ENCODE measurements at regions of chr3 and their contacts with region 1.

Region 1: GRCh38 chr3:52231502-52232293 is 6.3 kb upstream of the TLR9 start:
- DNase-seq: peak; percentile 60 to 93 (median 85)
- ATAC-seq: peak; percentile 80 to 87 (median 80)
- H3K4me3 ChIP-seq: no peak overlapping the region
- H3K4me3 Mint-ChIP-seq: peak overlapping the region in 2 of 3 donors; percentile 51 to 55
- H3K27ac ChIP-seq: peak overlapping the region; percentile 13
- H3K27ac Mint-ChIP-seq: peak overlapping the region; percentile 84 to 85
- H3K4me1 ChIP-seq: peaks cover 12 to 59% of the 10 kb centered on the region in 2 experiments
- H3K4me1 Mint-ChIP-seq: peaks cover 53 to 65% (median 57%) of the 10 kb centered on the region in 3 donors
- H3K27me3 ChIP-seq: no peaks in the 10 kb centered on the region
- H3K27me3 Mint-ChIP-seq: no peaks in the 10 kb centered on the region

Region 2: DNA sequence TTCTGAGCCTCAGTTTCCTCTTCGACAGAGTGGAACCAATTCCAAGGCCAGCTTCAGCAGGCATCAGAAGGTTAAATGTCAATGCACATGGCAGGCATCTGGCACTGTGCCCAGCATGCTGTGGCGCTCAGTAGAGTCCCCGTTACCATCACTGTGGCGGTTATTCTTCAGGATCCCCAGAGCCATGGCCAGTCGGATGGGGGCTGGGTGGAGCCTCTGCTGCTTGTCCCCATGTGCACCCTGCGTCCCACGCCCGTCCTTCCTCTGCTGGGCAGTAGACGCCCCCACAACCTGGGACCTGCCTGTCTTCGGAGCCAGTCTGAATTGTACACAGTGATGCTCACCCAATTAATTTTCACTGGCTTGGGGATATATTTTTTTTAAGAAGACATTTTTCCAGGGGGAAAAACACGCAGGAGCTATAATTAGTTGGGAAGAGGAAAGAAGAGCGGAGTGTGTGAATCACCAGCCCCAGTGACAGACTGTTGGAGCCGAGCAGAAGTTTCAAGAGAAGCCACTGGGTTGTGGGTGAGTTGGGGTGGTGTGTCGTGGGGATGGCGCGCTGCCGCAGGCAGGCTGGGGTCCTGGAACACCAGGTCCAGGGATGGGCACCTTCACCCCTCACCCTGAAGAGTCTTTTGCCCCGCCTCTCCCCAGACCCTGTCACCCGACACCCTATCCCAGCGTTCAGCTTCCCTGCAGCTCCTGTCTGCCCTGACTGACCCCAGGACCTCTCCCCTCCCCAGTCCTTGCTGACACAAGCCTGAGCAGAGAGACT is 209.2 kb before region 1 on chr3:
- CTCF ChIA-PET with region 1: no interaction called
- POLR2A ChIA-PET with region 1: no interaction called
- DNase-seq: no peak
- ATAC-seq: no peak
- H3K4me3 ChIP-seq: no peak overlapping the region
- H3K4me3 Mint-ChIP-seq: no peak overlapping the region
- H3K27ac ChIP-seq: no peak overlapping the region
- H3K27ac Mint-ChIP-seq: no peak overlapping the region
- H3K4me1 ChIP-seq: peaks cover 0 to 2% of the 10 kb centered on the region in 2 experiments
- H3K4me1 Mint-ChIP-seq: peaks cover 0 to 9% (median 0%) of the 10 kb centered on the region in 3 donors
- H3K27me3 ChIP-seq: no peaks in the 10 kb centered on the region
- H3K27me3 Mint-ChIP-seq: no peaks in the 10 kb centered on the region

Region 3: DNA sequence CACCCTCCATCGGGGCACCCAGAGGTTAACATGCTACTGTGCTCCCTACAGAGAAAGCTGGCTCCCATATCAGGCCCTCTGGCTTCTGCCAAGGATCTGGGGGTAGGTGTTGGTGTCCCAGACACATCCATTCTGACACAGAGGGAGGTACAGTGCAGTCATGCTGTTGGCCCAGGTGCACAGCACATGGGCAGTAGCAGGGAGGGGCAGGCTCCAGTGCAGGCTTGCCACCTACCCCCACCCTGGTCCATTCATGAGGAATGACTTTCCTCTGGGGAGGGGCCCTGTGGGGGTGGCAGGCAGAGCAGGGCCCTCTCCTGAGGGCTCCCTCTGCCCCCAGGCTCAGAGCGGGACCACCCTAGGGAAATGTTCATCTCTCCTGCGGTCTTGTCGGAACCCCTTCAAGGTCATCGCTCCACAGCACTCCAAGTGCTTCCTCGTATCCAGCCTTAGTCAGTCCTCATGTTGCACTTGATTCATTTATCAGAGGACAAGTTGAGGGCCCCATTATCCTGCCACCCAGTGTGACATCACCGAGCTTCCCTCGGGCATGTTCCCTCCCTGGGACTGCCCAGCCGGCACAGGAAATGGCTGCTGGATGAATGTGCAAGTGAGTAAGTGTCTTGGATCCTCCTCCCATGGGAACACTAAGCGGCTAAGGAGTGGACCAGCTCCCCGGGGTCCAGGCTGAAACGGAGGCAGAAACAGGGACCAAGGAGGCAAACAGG is 185.3 kb before region 1 on chr3:
- CTCF ChIA-PET with region 1: no interaction called
- POLR2A ChIA-PET with region 1: no interaction called
- DNase-seq: no peak
- ATAC-seq: no peak
- H3K4me3 ChIP-seq: no peak overlapping the region
- H3K4me3 Mint-ChIP-seq: no peak overlapping the region
- H3K27ac ChIP-seq: peak overlapping the region; percentile 29
- H3K27ac Mint-ChIP-seq: peak overlapping the region; percentile 72 to 84
- H3K4me1 ChIP-seq: peaks cover 3 to 59% of the 10 kb centered on the region in 2 experiments
- H3K4me1 Mint-ChIP-seq: peaks cover 41 to 58% (median 55%) of the 10 kb centered on the region in 3 donors
- H3K27me3 ChIP-seq: no peaks in the 10 kb centered on the region
- H3K27me3 Mint-ChIP-seq: no peaks in the 10 kb centered on the region

Region 4: DNA sequence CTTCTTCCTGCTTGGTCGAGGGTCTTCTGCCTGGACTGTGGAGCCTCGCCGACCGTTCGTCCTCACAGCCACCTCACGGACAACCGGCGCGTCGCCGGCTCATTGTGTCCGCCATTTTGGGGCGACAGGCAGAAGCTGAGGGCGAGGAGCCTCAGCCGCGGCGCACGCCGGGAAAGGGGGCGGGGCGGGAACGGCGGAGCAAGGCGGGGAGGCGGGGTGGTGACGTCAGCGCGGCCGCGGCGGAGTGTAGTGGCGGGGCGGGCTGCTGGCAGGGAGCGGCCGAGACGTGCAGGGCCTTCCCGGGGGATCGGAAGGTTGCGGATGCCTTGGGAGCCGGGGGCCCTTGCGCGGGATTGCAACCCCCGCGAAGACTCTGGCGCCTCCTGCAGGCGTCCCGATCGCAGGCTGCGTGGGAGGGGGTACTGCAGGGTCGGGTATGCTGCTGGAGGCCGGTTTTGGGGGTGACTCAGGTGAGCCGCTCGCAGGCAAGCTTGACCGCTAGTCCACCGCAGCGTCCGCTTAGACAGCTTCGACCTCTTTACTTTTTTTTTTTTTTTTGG is 46.9 kb after region 1 on chr3 and contains the start of gene WDR82:
- CTCF ChIA-PET with region 1: interaction called, 3 to 13 read pairs
- POLR2A ChIA-PET with region 1: no interaction called
- DNase-seq: peak; percentile 91 to 99 (median 96)
- ATAC-seq: peak; percentile 81 to 87 (median 84)
- H3K4me3 ChIP-seq: peak within 1 kb of the TSS; percentile 69 to 86
- H3K4me3 Mint-ChIP-seq: peak within 1 kb of the TSS; percentile 89 to 92 (median 91)
- H3K27ac ChIP-seq: peak within 1 kb of the TSS; percentile 93
- H3K27ac Mint-ChIP-seq: peak within 1 kb of the TSS; percentile 95 to 98
- H3K4me1 ChIP-seq: peaks cover 48 to 62% of the 10 kb centered on the region in 2 experiments
- H3K4me1 Mint-ChIP-seq: peaks cover 60 to 81% (median 74%) of the 10 kb centered on the region in 3 donors
- H3K27me3 ChIP-seq: no peaks in the 10 kb centered on the region
- H3K27me3 Mint-ChIP-seq: no peaks in the 10 kb centered on the region
- total RNA-seq, gene WDR82: 119 to 159 (median 154) TPM

Measured in T-cell (primary cell).